T-cell (primary cell): ENCODE measurements at regions of chr2 and their contacts with region 1.

Region 1: DNA sequence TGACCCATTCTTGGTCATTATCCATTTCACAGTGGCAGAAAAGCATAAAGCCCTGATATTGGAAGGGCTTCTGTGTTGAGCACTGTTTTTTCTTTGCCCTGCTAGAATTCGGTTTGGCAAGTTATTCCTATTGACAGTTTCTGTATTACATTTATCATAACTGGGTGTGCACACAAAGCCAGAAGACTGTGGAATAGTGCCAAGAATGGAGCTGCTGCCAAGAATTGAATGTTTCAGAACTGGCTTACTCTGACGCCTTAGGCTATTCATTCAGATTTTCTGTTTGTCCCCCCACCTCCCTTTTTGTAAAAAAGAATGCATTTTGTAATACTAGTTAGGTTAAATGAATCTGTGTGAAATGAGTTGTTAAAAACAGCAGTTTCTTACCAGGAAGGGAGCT is 12.7 kb downstream of the KDM3A start:
- DNase-seq: no peak
- ATAC-seq: no peak
- H3K4me3 ChIP-seq: no peak overlapping the region
- H3K4me3 Mint-ChIP-seq: no peak overlapping the region
- H3K27ac ChIP-seq: no peak overlapping the region
- H3K27ac Mint-ChIP-seq: no peak overlapping the region
- H3K4me1 ChIP-seq: peaks cover 0 to 2% of the 10 kb centered on the region in 2 experiments
- H3K4me1 Mint-ChIP-seq: peaks cover 25 to 46% (median 41%) of the 10 kb centered on the region in 3 donors
- H3K27me3 ChIP-seq: no peaks in the 10 kb centered on the region
- H3K27me3 Mint-ChIP-seq: no peaks in the 10 kb centered on the region

Region 2: DNA sequence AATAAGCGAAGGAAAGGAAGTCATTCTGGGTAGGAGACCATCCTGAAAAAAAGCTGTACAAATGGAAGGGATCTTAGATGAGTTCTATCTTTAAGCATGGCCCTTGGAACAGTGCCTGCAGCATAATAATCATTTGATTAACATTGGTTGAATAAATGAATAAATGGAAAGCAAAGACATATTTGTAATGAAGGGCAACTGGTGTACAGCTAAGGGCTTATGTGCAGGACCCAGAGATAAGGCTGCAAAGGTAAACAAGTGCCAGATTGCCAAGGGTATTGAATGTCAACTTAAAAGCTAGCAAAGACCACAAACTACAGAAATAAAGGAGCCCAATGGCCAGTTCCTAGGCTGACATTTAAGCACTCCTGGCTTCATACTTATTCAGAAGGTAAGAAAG is 278.0 kb before region 1 on chr2:
- CTCF ChIA-PET with region 1: no interaction called
- POLR2A ChIA-PET with region 1: interaction called in 1 of 2 experiments, 10 read pairs
- DNase-seq: no peak
- ATAC-seq: no peak
- H3K4me3 ChIP-seq: no peak overlapping the region
- H3K4me3 Mint-ChIP-seq: no peak overlapping the region
- H3K27ac ChIP-seq: no peak overlapping the region
- H3K27ac Mint-ChIP-seq: no peak overlapping the region
- H3K4me1 ChIP-seq: no peaks in the 10 kb centered on the region
- H3K4me1 Mint-ChIP-seq: peaks cover 21 to 30% (median 28%) of the 10 kb centered on the region in 3 donors
- H3K27me3 ChIP-seq: no peaks in the 10 kb centered on the region
- H3K27me3 Mint-ChIP-seq: no peaks in the 10 kb centered on the region

Region 3: DNA sequence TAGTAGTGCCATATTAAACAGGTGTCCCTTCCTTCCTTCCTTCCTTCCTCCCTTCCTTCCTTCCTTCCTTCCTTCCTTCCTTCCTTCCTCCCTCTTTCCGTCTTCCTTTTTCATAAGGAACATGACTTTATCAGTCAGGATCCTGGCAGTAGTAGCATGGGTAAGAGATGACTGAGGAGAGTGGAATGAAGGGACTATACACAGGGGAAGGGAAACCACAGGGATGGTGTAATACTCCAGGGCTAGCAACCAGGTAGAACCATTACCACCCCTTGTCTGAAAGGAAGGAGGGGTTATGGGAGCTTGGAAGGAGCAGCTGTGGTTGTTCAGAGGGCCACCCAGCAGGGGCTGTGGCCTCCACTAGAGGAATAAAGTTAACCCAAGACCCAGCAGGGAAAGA is 35.9 kb before region 1 on chr2:
- CTCF ChIA-PET with region 1: interaction called, 3 read pairs
- POLR2A ChIA-PET with region 1: interaction called in 1 of 2 experiments, 15 read pairs
- DNase-seq: no peak
- ATAC-seq: no peak
- H3K4me3 ChIP-seq: no peak overlapping the region
- H3K4me3 Mint-ChIP-seq: no peak overlapping the region
- H3K27ac ChIP-seq: no peak overlapping the region
- H3K27ac Mint-ChIP-seq: no peak overlapping the region
- H3K4me1 ChIP-seq: peaks cover 0 to 2% of the 10 kb centered on the region in 2 experiments
- H3K4me1 Mint-ChIP-seq: peaks cover 0 to 6% (median 3%) of the 10 kb centered on the region in 3 donors
- H3K27me3 ChIP-seq: peaks cover 0 to 8% of the 10 kb centered on the region in 2 experiments
- H3K27me3 Mint-ChIP-seq: peaks cover 23 to 36% of the 10 kb centered on the region in 2 donors